ENCODE measurements at regions of chr7 and their contacts with region 1.

Region 1: DNA sequence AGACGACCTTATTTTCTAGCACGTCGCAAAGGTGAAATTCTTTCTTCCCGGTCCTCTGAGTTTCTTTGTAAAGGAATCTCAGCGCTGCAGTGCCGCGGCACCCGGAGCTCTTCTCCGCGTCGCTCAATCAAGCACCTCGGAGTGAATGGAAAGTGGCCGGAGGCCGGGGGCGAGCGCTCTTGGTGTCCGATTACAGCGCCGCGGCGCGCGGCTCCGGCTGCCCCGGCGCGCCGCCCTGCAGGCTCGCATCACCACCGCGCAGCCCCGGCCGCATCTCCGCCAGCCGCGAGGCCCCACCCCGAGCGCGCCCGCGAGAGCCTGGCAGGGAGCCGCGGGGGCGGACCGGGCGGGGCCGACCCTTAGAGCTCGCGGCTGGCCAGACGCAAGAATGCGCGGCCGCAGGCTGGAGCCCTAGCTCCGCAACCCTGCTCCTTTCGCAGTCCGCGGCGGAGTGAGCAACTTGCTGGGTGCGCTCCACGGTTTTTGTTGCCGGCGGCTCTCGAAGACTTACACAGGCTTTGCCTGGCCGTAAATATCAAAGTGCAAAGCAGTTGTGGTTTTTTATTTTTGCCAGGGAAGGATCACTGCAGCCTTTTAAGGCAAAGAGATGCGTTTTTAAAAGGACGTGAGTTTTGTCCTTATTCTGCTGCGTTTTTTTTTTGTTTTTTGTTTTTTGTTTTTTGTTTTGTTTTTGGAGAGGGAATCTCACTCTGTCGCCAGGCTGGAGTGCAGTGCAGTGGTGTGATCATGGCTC is at the start of gene SEMA3C:
- DNase-seq: peak; percentile 70 to 94
- ATAC-seq: peak; percentile 94 to 95
- H3K4me3 ChIP-seq: peak within 1 kb of the TSS; percentile 84
- H3K27ac ChIP-seq: peak within 1 kb of the TSS; percentile 94 to 95
- H3K4me1 ChIP-seq: peaks cover 53% of the 10 kb centered on the region
- CTCF ChIP-seq: no peak
- EP300 ChIP-seq: no peak
- POLR2A ChIP-seq: peak; percentile 91
- RAD21 ChIP-seq: peak; percentile 11 to 61; a peak in 4 of 5 replicates
- polyA plus RNA-seq, gene SEMA3C: 208 and 212 TPM in 2 replicates

Region 2: GRCh38 chr7:80807166-80807885 is 111.8 kb before region 1 on chr7:
- CTCF ChIA-PET with region 1: no interaction called
- POLR2A ChIA-PET with region 1: no interaction called
- DNase-seq: no peak
- ATAC-seq: no peak
- H3K4me3 ChIP-seq: no peak overlapping the region
- H3K27ac ChIP-seq: peak overlapping the region; percentile 6 to 78; a peak in 3 of 6 replicates
- H3K4me1 ChIP-seq: peaks cover 38% of the 10 kb centered on the region
- CTCF ChIP-seq: no peak
- EP300 ChIP-seq: no peak
- POLR2A ChIP-seq: no peak
- RAD21 ChIP-seq: no peak

Region 3: GRCh38 chr7:80883188-80884025 is 35.7 kb before region 1 on chr7:
- CTCF ChIA-PET with region 1: interaction called, 9 read pairs
- POLR2A ChIA-PET with region 1: interaction called, 11 read pairs
- DNase-seq: peak; percentile 68 to 96
- ATAC-seq: peak; percentile 93 to 94
- H3K4me3 ChIP-seq: peak overlapping the region; percentile 16; the same call in 2 of the 3 replicates
- H3K27ac ChIP-seq: peak overlapping the region; percentile 87 to 91
- H3K4me1 ChIP-seq: peaks cover 87% of the 10 kb centered on the region
- CTCF ChIP-seq: no peak
- EP300 ChIP-seq: peak; percentile 89 to 96; a peak in 4 of 5 replicates
- POLR2A ChIP-seq: no peak
- RAD21 ChIP-seq: peak; percentile 30 to 45; a peak in 2 of 5 replicates

Region 4: DNA sequence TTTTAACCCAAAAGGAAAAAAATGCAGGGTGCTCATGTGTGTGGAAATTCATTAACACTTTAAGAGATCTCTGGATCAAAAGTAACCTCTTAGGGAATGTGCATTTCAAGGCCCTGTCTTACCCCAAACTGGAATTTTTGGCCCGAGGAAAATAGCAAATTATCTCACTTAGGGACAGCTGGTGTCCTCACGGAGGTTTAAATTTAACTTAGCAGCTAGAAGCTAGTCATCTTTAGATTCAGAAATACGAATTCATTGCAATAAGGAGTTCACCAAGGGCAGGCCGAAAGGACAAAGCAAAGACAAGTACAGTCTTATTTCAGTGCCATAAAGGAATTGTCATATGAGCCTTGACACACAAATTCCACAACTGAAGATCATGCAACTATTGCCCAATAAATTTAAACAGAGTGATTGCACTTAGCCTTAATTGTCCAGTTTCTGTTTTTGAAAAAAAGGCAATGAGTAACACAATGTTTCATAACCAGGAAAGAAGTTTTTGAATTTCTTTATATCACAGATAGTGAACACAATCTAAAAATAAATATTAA is 22.2 kb after region 1 on chr7:
- CTCF ChIA-PET with region 1: interaction called, 17 read pairs
- POLR2A ChIA-PET with region 1: interaction called, 73 read pairs
- DNase-seq: peak; percentile 17 to 56
- ATAC-seq: no peak
- H3K4me3 ChIP-seq: no peak overlapping the region
- H3K27ac ChIP-seq: peak overlapping the region; percentile 88 to 98
- H3K4me1 ChIP-seq: peaks cover 30% of the 10 kb centered on the region
- CTCF ChIP-seq: no peak
- EP300 ChIP-seq: peak; percentile 59 to 76; a peak in 4 of 5 replicates
- POLR2A ChIP-seq: no peak
- RAD21 ChIP-seq: peak in 1 of 2 experiments; percentile 44; a peak in 2 of 5 replicates

Region 5: GRCh38 chr7:80960244-80960795 is 41.2 kb after region 1 on chr7:
- CTCF ChIA-PET with region 1: no interaction called
- POLR2A ChIA-PET with region 1: no interaction called
- DNase-seq: no peak
- ATAC-seq: no peak
- H3K4me3 ChIP-seq: no peak overlapping the region
- H3K27ac ChIP-seq: no peak overlapping the region
- H3K4me1 ChIP-seq: no peaks in the 10 kb centered on the region
- CTCF ChIP-seq: no peak
- EP300 ChIP-seq: no peak
- POLR2A ChIP-seq: no peak
- RAD21 ChIP-seq: no peak

Region 6: DNA sequence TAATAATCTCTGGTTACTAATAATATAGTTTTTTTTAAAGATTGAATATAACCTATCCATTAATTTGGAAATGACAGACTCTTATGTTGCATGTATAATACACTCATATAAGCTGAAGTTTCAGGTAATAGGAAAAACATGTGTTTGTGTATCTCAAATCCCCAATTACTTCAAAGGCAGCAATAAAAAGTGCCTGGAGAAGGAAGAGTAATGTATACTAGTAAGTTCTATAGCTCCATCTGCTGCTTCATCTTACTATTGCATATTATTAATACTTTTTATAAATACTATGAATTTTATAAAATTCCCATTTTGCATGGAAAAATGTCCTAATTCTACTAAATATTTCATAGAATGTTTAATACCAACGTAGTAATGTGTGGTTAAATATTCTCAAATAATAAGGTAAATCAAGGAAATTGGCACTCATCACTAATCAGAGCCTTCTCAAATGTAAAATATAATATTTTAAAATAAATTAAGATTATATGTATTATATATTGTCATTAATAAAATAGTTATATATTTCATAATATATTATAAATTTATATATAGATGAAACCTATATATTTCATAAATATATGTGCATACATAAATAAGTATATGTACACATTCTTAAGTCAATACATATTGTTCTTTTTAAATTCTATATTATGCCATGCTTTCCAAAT is 538.9 kb after region 1 on chr7:
- CTCF ChIA-PET with region 1: interaction called, 63 read pairs
- POLR2A ChIA-PET with region 1: interaction called, 20 read pairs
- DNase-seq: peak; percentile 28 to 50
- ATAC-seq: no peak
- H3K4me3 ChIP-seq: no peak overlapping the region
- H3K27ac ChIP-seq: peak overlapping the region; percentile 17 to 76; a peak in 4 of 6 replicates
- H3K4me1 ChIP-seq: peaks cover 25% of the 10 kb centered on the region
- CTCF ChIP-seq: peak; percentile 69
- EP300 ChIP-seq: no peak
- POLR2A ChIP-seq: no peak
- RAD21 ChIP-seq: peak; percentile 82 to 90

Measured in A549 (cell line).